ENCODE measurements at regions of chr15 and their contacts with region 1.

Region 1: GRCh38 chr15:80173022-80173759 is 20.4 kb downstream of the FAH start:
- DNase-seq: peak; percentile 78
- H3K4me3 Mint-ChIP-seq: no peak overlapping the region
- H3K27ac Mint-ChIP-seq: no peak overlapping the region
- H3K4me1 Mint-ChIP-seq: no peaks in the 10 kb centered on the region
- H3K27me3 Mint-ChIP-seq: no peaks in the 10 kb centered on the region

Region 2: GRCh38 chr15:80031841-80032240 is 141.3 kb before region 1 on chr15:
- CTCF ChIA-PET with region 1: no interaction called
- POLR2A ChIA-PET with region 1: no interaction called
- DNase-seq: peak; percentile 30
- H3K4me3 Mint-ChIP-seq: no peak overlapping the region
- H3K27ac Mint-ChIP-seq: peak overlapping the region; percentile 83
- H3K4me1 Mint-ChIP-seq: peaks cover 35% of the 10 kb centered on the region
- H3K27me3 Mint-ChIP-seq: no peaks in the 10 kb centered on the region

Region 3: DNA sequence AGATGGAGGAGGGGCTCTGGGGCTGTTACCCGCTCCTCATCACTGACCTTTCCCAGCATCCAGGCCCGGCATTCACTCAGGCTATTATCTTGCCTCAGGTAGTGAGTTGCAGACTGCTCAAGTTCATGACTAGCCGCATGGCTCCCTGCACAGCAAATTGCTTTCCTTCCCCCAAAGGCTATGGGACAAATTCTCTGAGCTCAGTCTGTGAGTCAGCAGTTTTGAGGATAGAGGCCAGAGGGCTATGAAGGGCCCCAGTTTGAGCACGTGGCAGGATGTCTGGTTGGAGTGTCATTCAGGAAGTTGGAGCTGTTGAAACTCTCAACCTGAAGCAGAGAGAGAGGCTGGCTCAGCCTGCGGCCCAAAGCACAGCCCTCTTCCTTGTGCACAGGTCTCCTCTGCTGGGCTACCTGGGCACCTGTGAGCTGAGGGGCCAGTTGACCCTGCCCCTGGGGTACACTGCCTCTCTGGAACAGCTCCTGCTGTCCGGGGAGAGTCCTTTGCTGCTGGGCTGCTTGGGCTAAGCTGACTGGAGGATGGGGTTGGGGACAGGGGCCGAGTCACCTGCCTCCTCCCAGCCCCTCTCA is 12.5 kb before region 1 on chr15:
- CTCF ChIA-PET with region 1: interaction called, 17 read pairs
- POLR2A ChIA-PET with region 1: no interaction called
- DNase-seq: peak; percentile 79
- H3K4me3 Mint-ChIP-seq: no peak overlapping the region
- H3K27ac Mint-ChIP-seq: peak overlapping the region; percentile 85
- H3K4me1 Mint-ChIP-seq: peaks cover 30% of the 10 kb centered on the region
- H3K27me3 Mint-ChIP-seq: no peaks in the 10 kb centered on the region